CD4-positive, alpha-beta T cell (primary cell): ENCODE measurements at regions of chr22 and their contacts with region 1.

Region 1: DNA sequence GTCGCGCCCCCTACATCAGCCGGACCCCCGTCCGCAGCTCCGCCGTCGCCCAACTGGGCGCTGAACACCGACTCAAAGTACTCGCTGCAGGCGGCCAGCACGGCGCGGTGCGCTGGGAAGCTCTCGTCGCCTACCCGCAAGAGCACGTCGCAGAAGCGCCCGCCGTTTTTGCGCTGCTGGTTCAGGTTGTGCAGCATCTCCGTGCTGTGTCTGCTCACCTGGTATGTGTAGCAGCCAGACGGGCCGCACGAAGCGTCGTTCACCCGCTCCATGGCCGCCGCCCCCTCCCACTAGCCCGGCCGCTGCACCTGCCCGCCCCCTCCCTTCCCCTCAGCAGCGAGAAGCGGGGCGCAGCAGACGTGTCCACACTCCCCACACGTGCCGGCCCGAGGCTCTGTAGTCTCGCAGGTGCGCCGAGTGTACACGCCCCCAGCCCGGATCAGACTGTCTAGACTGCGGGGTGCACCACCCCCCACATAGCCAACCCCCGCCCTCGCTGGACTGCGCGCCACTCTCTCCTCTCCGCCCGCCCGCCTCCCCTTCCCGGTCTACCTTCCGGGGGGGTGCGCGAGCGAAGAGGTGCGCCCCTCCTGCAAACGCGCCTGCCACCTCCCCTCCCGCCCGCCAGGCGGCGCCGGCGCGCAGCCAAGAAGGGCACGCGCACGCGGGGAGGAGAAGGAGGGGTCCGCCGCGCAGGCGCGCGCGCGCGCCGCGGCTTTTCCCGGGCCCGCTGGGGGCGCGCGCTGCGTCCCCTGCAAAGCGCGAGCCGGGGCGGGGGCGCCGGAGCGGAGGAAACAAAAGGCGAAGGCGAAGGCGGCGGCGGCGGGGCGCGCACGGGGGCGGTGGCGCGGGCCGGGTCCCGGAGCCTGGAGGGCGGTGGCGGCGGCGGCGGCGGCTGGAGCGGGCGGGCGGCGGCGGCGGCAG is 553 bp downstream of the PATZ1 start:
- DNase-seq: peak; percentile 84 to 97 (median 90)
- ATAC-seq: peak; percentile 69
- H3K4me3 ChIP-seq: peak overlapping the region; percentile 88
- H3K4me3 Mint-ChIP-seq: peak overlapping the region; percentile 97
- H3K27ac ChIP-seq: peak overlapping the region in 1 of 2 donors; percentile 69
- H3K27ac Mint-ChIP-seq: peak overlapping the region; percentile 95
- H3K4me1 ChIP-seq: peaks cover 65% of the 10 kb centered on the region
- H3K4me1 Mint-ChIP-seq: peaks cover 54% of the 10 kb centered on the region
- H3K27me3 ChIP-seq: no peaks in the 10 kb centered on the region
- H3K27me3 Mint-ChIP-seq: no peaks in the 10 kb centered on the region
- CTCF ChIP-seq: peak; percentile 73

Region 2: GRCh38 chr22:31056986-31057599 is 288.5 kb before region 1 on chr22:
- CTCF ChIA-PET with region 1: no interaction called
- POLR2A ChIA-PET with region 1: no interaction called
- intact Hi-C with region 1: no loop called
- DNase-seq: no peak
- ATAC-seq: no peak
- H3K4me3 ChIP-seq: no peak overlapping the region
- H3K4me3 Mint-ChIP-seq: no peak overlapping the region
- H3K27ac ChIP-seq: no peak overlapping the region
- H3K27ac Mint-ChIP-seq: no peak overlapping the region
- H3K4me1 ChIP-seq: no peaks in the 10 kb centered on the region
- H3K4me1 Mint-ChIP-seq: no peaks in the 10 kb centered on the region
- H3K27me3 ChIP-seq: no peaks in the 10 kb centered on the region
- H3K27me3 Mint-ChIP-seq: no peaks in the 10 kb centered on the region
- CTCF ChIP-seq: no peak

Region 3: GRCh38 chr22:31107178-31107893 is 238.3 kb before region 1 on chr22 and contains the start of gene SELENOM:
- CTCF ChIA-PET with region 1: no interaction called
- POLR2A ChIA-PET with region 1: interaction called, 12 read pairs
- intact Hi-C with region 1: loop called in 1 of 2 experiments (anchors 5 kb)
- DNase-seq: peak; percentile 71 to 95 (median 82)
- ATAC-seq: peak; percentile 90
- H3K4me3 ChIP-seq: peak within 1 kb of the TSS; percentile 75
- H3K4me3 Mint-ChIP-seq: peak within 1 kb of the TSS; percentile 97
- H3K27ac ChIP-seq: peak within 1 kb of the TSS; percentile 24 to 51
- H3K27ac Mint-ChIP-seq: peak within 1 kb of the TSS; percentile 87
- H3K4me1 ChIP-seq: peaks cover 31% of the 10 kb centered on the region
- H3K4me1 Mint-ChIP-seq: peaks cover 24% of the 10 kb centered on the region
- H3K27me3 ChIP-seq: no peaks in the 10 kb centered on the region
- H3K27me3 Mint-ChIP-seq: no peaks in the 10 kb centered on the region
- CTCF ChIP-seq: peak; percentile 70
- total RNA-seq, gene SELENOM: 78.0 to 82.4 TPM

Region 4: GRCh38 chr22:31278622-31279326 is 66.8 kb before region 1 on chr22:
- CTCF ChIA-PET with region 1: no interaction called
- POLR2A ChIA-PET with region 1: interaction called, 16 read pairs
- intact Hi-C with region 1: no loop called
- DNase-seq: peak in 11 of 14 experiments; percentile 48 to 87 (median 57)
- ATAC-seq: peak; percentile 73
- H3K4me3 ChIP-seq: peak overlapping the region; percentile 13
- H3K4me3 Mint-ChIP-seq: peak overlapping the region; percentile 79
- H3K27ac ChIP-seq: peak overlapping the region; percentile 75 to 85
- H3K27ac Mint-ChIP-seq: peak overlapping the region; percentile 98
- H3K4me1 ChIP-seq: peaks cover 87% of the 10 kb centered on the region
- H3K4me1 Mint-ChIP-seq: peaks cover 95% of the 10 kb centered on the region
- H3K27me3 ChIP-seq: no peaks in the 10 kb centered on the region
- H3K27me3 Mint-ChIP-seq: no peaks in the 10 kb centered on the region
- CTCF ChIP-seq: no peak

Region 5: GRCh38 chr22:31399211-31400028 is 53.8 kb after region 1 on chr22 and contains the start of gene DRG1:
- CTCF ChIA-PET with region 1: interaction called, 5 read pairs
- POLR2A ChIA-PET with region 1: interaction called, 37 read pairs
- intact Hi-C with region 1: loop called (anchors 1 kb)
- DNase-seq: peak; percentile 92 to 98 (median 96)
- ATAC-seq: peak; percentile 97
- H3K4me3 ChIP-seq: peak within 1 kb of the TSS; percentile 90
- H3K4me3 Mint-ChIP-seq: peak within 1 kb of the TSS; percentile 94
- H3K27ac ChIP-seq: peak within 1 kb of the TSS; percentile 77 to 81
- H3K27ac Mint-ChIP-seq: peak within 1 kb of the TSS; percentile 83
- H3K4me1 ChIP-seq: peaks cover 22% of the 10 kb centered on the region
- H3K4me1 Mint-ChIP-seq: peaks cover 18% of the 10 kb centered on the region
- H3K27me3 ChIP-seq: no peaks in the 10 kb centered on the region
- H3K27me3 Mint-ChIP-seq: no peaks in the 10 kb centered on the region
- CTCF ChIP-seq: no peak
- total RNA-seq, gene DRG1: 57.3 to 72.8 TPM

Region 6: GRCh38 chr22:31630331-31631329 is 285.0 kb after region 1 on chr22:
- CTCF ChIA-PET with region 1: no interaction called
- POLR2A ChIA-PET with region 1: interaction called, 16 read pairs
- intact Hi-C with region 1: loop called (anchors 2 kb)
- DNase-seq: peak; percentile 73 to 95 (median 86)
- ATAC-seq: peak; percentile 91
- H3K4me3 ChIP-seq: peak overlapping the region; percentile 74
- H3K4me3 Mint-ChIP-seq: peak overlapping the region; percentile 90
- H3K27ac ChIP-seq: peak overlapping the region; percentile 85 to 91
- H3K27ac Mint-ChIP-seq: peak overlapping the region; percentile 94
- H3K4me1 ChIP-seq: peaks cover 65% of the 10 kb centered on the region
- H3K4me1 Mint-ChIP-seq: peaks cover 41% of the 10 kb centered on the region
- H3K27me3 ChIP-seq: no peaks in the 10 kb centered on the region
- H3K27me3 Mint-ChIP-seq: no peaks in the 10 kb centered on the region
- CTCF ChIP-seq: no peak

Region 7: GRCh38 chr22:31661851-31662656 is 316.5 kb after region 1 on chr22 and contains the start of gene PISD:
- CTCF ChIA-PET with region 1: no interaction called
- POLR2A ChIA-PET with region 1: interaction called, 11 read pairs
- intact Hi-C with region 1: no loop called
- DNase-seq: peak; percentile 92 to 99 (median 96)
- ATAC-seq: peak; percentile 90
- H3K4me3 ChIP-seq: peak within 1 kb of the TSS; percentile 95
- H3K4me3 Mint-ChIP-seq: peak within 1 kb of the TSS; percentile 99
- H3K27ac ChIP-seq: peak within 1 kb of the TSS; percentile 62 to 70
- H3K27ac Mint-ChIP-seq: peak within 1 kb of the TSS; percentile 98
- H3K4me1 ChIP-seq: peaks cover 29% of the 10 kb centered on the region
- H3K4me1 Mint-ChIP-seq: peaks cover 38% of the 10 kb centered on the region
- H3K27me3 ChIP-seq: no peaks in the 10 kb centered on the region
- H3K27me3 Mint-ChIP-seq: no peaks in the 10 kb centered on the region
- CTCF ChIP-seq: no peak
- total RNA-seq, gene PISD: 23.4 to 25.3 TPM